Activated CD4-positive, alpha-beta memory T cell treated with anti-CD3 and anti-CD28 coated beads for 36 hours (primary cell): ENCODE measurements at regions of chr10 and their contacts with region 1.

Region 1: GRCh38 chr10:91163269-91163868 is 57.1 kb upstream of the PCGF5 start:
- DNase-seq: peak; percentile 79
- H3K4me3 Mint-ChIP-seq: peak overlapping the region; percentile 82
- H3K27ac Mint-ChIP-seq: peak overlapping the region; percentile 87
- H3K4me1 Mint-ChIP-seq: peaks cover 47% of the 10 kb centered on the region
- H3K27me3 Mint-ChIP-seq: no peaks in the 10 kb centered on the region

Region 2: GRCh38 chr10:91190876-91191583 is 27.7 kb after region 1 on chr10:
- CTCF ChIA-PET with region 1: no interaction called
- POLR2A ChIA-PET with region 1: interaction called, 3 read pairs
- intact Hi-C with region 1: loop called (anchors 1 kb)
- DNase-seq: no peak
- H3K4me3 Mint-ChIP-seq: no peak overlapping the region
- H3K27ac Mint-ChIP-seq: no peak overlapping the region
- H3K4me1 Mint-ChIP-seq: peaks cover 74% of the 10 kb centered on the region
- H3K27me3 Mint-ChIP-seq: no peaks in the 10 kb centered on the region

Region 3: DNA sequence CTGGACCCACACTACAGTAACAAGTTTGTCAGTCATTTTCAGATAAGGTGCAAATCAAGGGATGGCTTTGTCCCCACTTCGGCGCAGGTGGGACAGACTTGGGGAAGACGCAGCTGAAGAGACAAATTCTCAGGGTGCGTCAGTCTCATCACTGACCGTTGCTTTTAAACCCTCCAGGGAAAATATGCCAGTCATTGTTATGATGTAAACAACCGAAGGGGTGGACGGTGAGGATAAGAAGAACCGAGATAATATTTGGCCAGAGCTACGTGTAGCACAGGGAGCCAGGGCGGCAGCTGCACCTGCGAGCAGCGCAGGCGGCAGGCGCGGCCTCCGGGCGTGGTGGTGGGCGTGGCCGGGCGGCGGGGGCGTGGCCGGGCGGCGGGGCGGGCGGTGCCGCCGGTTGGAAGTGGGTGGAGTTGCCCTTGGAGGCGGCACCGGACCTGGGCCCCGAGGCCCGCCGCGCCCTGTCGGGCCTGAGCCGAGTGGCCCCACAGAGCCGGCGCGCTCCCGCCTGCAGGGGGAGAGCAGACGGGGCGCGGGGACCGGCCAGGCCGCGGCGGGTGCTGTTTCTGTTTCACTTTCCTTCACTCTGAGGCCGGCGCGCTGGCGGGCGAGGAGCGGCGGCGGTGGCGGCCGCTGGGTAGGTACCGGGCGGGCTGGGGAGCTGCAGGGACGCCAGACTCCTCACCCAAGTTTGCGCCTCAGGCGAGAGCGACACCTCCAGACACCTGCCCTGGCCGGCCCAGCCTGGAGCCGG is 57.0 kb after region 1 on chr10 and contains the start of gene PCGF5:
- CTCF ChIA-PET with region 1: interaction called, 13 read pairs
- POLR2A ChIA-PET with region 1: interaction called, 7 read pairs
- intact Hi-C with region 1: loop called (anchors 1 kb)
- DNase-seq: peak; percentile 94
- H3K4me3 Mint-ChIP-seq: peak within 1 kb of the TSS; percentile 90
- H3K27ac Mint-ChIP-seq: peak within 1 kb of the TSS; percentile 64
- H3K4me1 Mint-ChIP-seq: peaks cover 52% of the 10 kb centered on the region
- H3K27me3 Mint-ChIP-seq: no peaks in the 10 kb centered on the region
- total RNA-seq, gene PCGF5: 42.9 to 46.8 TPM

Region 4: GRCh38 chr10:91683975-91684374 is 520.6 kb after region 1 on chr10:
- CTCF ChIA-PET with region 1: no interaction called
- POLR2A ChIA-PET with region 1: no interaction called
- intact Hi-C with region 1: no loop called
- DNase-seq: no peak
- H3K4me3 Mint-ChIP-seq: no peak overlapping the region
- H3K27ac Mint-ChIP-seq: no peak overlapping the region
- H3K4me1 Mint-ChIP-seq: peaks cover 5% of the 10 kb centered on the region
- H3K27me3 Mint-ChIP-seq: no peaks in the 10 kb centered on the region